HCT116 (cell line): ENCODE measurements at regions of chrX and their contacts with region 1.

Region 1: DNA sequence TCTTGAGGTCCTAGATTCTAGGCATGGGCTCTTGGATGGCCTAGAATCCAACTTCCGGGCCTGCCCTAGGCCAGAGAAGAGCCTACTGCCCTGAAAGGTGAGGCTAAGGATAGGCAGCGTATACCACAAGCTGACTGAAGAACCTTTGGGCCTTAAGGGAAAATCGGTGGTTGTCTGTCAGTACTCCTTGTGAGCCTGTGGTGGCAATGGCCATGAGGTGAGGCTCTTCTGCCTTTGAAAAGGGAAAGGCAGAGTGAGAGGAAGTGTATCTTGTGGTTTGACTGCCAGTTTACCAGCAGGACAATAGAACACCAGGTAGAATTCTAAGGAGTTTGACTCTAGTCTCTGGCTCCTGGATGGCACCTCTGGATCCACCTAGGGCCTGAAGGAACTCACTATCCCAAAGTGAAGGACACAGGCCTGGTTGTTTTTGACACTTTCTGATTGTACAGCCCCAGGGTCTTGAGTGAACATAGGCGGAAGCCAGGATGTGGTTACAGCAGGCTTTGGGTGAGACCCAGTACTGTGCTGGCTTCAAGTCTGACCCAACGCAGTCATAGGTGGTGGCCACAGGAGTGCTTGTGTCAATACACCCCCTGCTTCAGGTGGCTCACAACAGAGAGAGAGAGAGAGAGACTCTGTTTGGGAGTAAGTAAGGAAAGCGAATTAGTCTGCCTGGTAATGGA is 20.9 kb downstream of the ITIH6 start:
- DNase-seq: no peak
- ATAC-seq: no peak
- H3K4me3 ChIP-seq: no peak overlapping the region
- H3K27ac ChIP-seq: no peak overlapping the region
- H3K4me1 ChIP-seq: no peaks in the 10 kb centered on the region
- H3K27me3 ChIP-seq: no peaks in the 10 kb centered on the region
- CTCF ChIP-seq: no peak
- POLR2A ChIP-seq: no peak
- RAD21 ChIP-seq: no peak

Region 2: GRCh38 chrX:54758114-54759055 is 18.7 kb before region 1 on chrX:
- CTCF ChIA-PET with region 1: no interaction called
- POLR2A ChIA-PET with region 1: no interaction called
- RAD21 ChIA-PET with region 1: no interaction called
- intact Hi-C with region 1: loop called (anchors 1 kb)
- DNase-seq: no peak
- ATAC-seq: peak; percentile 59
- H3K4me3 ChIP-seq: no peak overlapping the region
- H3K27ac ChIP-seq: no peak overlapping the region
- H3K4me1 ChIP-seq: no peaks in the 10 kb centered on the region
- H3K27me3 ChIP-seq: no peaks in the 10 kb centered on the region
- CTCF ChIP-seq: 0 out of 6 replicates have a peak, but pooled peaks of 1 of the 3 experiments have one; percentile 6
- POLR2A ChIP-seq: no peak
- RAD21 ChIP-seq: 0 out of 2 replicates have a peak, but pooled peaks have one; percentile 2